ENCODE measurements at regions of chr20 and their contacts with region 1.

Region 1: GRCh38 chr20:56527521-56527920 is 3.0 kb downstream of the FAM209A start:
- DNase-seq: no peak
- ATAC-seq: no peak
- H3K4me3 ChIP-seq: no peak overlapping the region
- H3K4me3 Mint-ChIP-seq: no peak overlapping the region
- H3K27ac ChIP-seq: no peak overlapping the region
- H3K27ac Mint-ChIP-seq: no peak overlapping the region
- H3K4me1 ChIP-seq: peaks cover 11% of the 10 kb centered on the region
- H3K4me1 Mint-ChIP-seq: peaks cover 12% of the 10 kb centered on the region
- H3K27me3 ChIP-seq: no peaks in the 10 kb centered on the region
- H3K27me3 Mint-ChIP-seq: no peaks in the 10 kb centered on the region
- CTCF ChIP-seq: no peak

Region 2: DNA sequence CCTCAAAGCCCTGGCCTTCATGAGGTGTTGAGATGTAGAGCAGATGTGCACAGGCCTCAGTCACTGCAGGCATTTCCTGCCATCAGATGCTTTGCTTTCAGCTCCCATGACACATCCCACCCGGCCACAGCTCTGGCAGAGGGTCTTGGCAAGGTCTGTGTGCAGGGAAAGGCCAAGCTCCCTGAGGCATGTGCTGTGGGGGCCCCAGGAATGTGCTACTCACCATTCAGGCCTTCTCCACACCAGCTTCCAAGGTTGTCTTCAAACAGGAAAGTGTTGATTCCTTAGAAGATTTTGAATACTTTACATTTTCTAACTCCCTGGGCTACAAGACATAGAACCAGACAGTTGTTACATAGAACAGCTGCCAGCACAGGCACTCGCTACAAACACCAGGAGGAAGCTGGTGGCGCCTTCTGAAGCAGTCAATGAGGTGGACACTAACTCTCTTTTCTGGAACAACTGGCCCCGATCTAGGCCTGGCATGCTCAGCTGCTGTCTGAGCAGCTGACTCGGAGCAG is 87.7 kb before region 1 on chr20:
- CTCF ChIA-PET with region 1: no interaction called
- POLR2A ChIA-PET with region 1: no interaction called
- intact Hi-C with region 1: no loop called
- DNase-seq: peak in 3 of 14 experiments; percentile 26 to 39 (median 37)
- ATAC-seq: peak; percentile 30
- H3K4me3 ChIP-seq: no peak overlapping the region
- H3K4me3 Mint-ChIP-seq: peak overlapping the region; percentile 81
- H3K27ac ChIP-seq: peak overlapping the region; percentile 9 to 32
- H3K27ac Mint-ChIP-seq: peak overlapping the region; percentile 89
- H3K4me1 ChIP-seq: peaks cover 61% of the 10 kb centered on the region
- H3K4me1 Mint-ChIP-seq: peaks cover 50% of the 10 kb centered on the region
- H3K27me3 ChIP-seq: no peaks in the 10 kb centered on the region
- H3K27me3 Mint-ChIP-seq: no peaks in the 10 kb centered on the region
- CTCF ChIP-seq: no peak

Region 3: DNA sequence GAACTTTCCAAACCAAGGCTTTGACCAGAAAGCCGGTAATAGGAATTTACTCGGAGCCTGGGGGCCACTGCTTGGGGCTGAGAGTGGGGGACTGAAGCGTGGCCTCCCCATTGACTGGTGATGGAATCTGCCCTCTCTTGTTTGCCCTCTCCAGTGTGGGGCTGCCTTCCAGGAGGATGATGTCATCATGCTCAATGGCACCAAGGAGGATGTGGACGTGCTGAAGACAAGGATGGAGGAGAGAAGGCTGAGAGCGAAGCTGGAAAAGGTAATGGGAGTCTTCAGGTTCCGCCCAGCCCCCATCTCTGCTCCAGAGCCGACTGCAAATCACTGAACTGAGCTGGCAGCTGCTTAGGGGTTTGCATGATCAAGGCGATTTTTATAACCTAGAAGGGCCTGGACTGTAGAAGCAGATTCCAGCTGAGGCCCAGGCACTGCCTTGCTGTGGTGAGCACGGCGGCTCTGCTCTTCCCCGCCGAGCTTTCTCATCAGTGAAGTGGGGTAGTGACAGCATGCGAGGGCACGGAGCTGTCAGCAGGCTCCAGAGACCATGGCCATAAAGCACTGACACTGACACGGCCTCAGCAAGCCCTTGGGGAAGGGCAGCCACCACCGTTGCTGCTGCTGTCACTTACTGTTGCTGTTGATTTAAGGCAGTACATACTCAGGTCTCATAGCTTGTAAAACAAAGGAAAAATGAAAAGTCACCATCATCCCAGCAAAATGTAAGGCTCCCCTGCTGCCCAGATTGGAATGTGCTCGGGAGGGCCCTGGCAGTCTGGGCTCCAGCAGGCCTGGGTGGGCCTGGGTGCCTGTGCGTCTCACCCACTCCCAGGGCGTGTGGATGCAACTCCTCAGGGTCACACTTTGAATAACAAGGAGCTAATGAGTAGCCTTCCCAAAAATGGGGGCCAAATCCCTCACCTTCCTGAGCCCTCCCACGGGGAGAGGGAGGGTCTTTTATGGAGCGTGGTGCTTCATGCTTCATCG is 14.1 kb before region 1 on chr20:
- CTCF ChIA-PET with region 1: no interaction called
- POLR2A ChIA-PET with region 1: interaction called, 3 read pairs
- intact Hi-C with region 1: loop called in 1 of 2 experiments (anchors 1 kb)
- DNase-seq: no peak
- ATAC-seq: no peak
- H3K4me3 ChIP-seq: no peak overlapping the region
- H3K4me3 Mint-ChIP-seq: no peak overlapping the region
- H3K27ac ChIP-seq: no peak overlapping the region
- H3K27ac Mint-ChIP-seq: no peak overlapping the region
- H3K4me1 ChIP-seq: no peaks in the 10 kb centered on the region
- H3K4me1 Mint-ChIP-seq: no peaks in the 10 kb centered on the region
- H3K27me3 ChIP-seq: no peaks in the 10 kb centered on the region
- H3K27me3 Mint-ChIP-seq: no peaks in the 10 kb centered on the region
- CTCF ChIP-seq: no peak

Measured in CD4-positive, alpha-beta T cell (primary cell).